Activated CD4-positive, alpha-beta T cell treated with anti-CD3 and anti-CD28 coated beads for 36 hours (primary cell): ENCODE measurements at regions of chr21 and their contacts with region 1.

Region 1: DNA sequence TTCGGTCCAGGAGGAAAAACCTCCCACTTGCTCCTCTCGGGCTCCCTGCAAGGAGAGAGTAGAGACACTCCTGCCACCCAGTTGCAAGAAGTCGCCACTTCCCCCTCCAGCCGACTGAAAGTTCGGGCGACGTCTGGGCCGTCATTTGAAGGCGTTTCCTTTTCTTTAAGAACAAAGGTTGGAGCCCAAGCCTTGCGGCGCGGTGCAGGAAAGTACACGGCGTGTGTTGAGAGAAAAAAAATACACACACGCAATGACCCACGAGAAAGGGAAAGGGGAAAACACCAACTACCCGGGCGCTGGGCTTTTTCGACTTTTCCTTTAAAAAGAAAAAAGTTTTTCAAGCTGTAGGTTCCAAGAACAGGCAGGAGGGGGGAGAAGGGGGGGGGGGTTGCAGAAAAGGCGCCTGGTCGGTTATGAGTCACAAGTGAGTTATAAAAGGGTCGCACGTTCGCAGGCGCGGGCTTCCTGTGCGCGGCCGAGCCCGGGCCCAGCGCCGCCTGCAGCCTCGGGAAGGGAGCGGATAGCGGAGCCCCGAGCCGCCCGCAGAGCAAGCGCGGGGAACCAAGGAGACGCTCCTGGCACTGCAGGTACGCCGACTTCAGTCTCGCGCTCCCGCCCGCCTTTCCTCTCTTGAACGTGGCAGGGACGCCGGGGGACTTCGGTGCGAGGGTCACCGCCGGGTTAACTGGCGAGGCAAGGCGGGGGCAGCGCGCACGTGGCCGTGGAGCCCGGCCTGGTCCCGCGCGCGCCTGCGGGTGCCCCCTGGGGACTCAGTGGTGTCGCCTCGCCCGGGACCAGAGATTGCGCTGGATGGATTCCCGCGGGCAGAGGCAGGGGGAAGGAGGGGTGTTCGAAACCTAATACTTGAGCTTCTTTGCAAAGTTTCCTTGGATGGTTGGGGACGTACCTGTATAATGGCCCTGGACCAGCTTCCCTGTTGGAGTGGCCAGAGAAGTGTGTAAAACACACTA is 45.3 kb downstream of the MRPL39 start:
- DNase-seq: peak; percentile 90
- ATAC-seq: peak; percentile 69
- H3K4me3 Mint-ChIP-seq: peak overlapping the region; percentile 93
- H3K27ac Mint-ChIP-seq: peak overlapping the region; percentile 100
- H3K4me1 Mint-ChIP-seq: peaks cover 43% of the 10 kb centered on the region
- H3K27me3 Mint-ChIP-seq: no peaks in the 10 kb centered on the region

Region 2: DNA sequence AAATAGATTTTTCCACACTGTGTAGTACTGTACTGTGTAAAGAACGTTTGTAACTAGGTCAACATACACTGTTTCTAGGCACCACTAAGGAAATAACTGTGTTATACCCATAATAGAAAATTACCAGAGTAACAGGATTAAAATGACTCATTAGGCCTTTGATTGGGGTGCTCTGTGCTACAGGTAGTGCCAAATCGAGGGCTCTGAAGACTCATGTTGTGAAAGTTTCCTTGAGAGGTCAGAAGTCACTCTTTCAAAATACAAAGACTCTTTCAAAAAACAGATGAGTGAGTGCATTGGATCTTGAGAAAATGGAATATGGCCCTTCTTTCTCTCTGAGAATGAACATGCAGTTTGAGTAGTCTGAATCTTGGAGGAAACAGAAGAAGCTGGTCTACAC is 97.7 kb before region 1 on chr21:
- CTCF ChIA-PET with region 1: interaction called, 4 read pairs
- POLR2A ChIA-PET with region 1: interaction called, 10 read pairs
- intact Hi-C with region 1: no loop called
- DNase-seq: peak; percentile 43
- ATAC-seq: peak; percentile 77
- H3K4me3 Mint-ChIP-seq: peak overlapping the region; percentile 45
- H3K27ac Mint-ChIP-seq: peak overlapping the region; percentile 95
- H3K4me1 Mint-ChIP-seq: peaks cover 77% of the 10 kb centered on the region
- H3K27me3 Mint-ChIP-seq: no peaks in the 10 kb centered on the region

Region 3: GRCh38 chr21:25501996-25502665 is 59.8 kb before region 1 on chr21:
- CTCF ChIA-PET with region 1: interaction called, 9 read pairs
- POLR2A ChIA-PET with region 1: interaction called, 16 read pairs
- intact Hi-C with region 1: loop called (anchors 1 kb)
- DNase-seq: peak; percentile 83
- ATAC-seq: peak; percentile 87
- H3K4me3 Mint-ChIP-seq: peak overlapping the region; percentile 57
- H3K27ac Mint-ChIP-seq: peak overlapping the region; percentile 99
- H3K4me1 Mint-ChIP-seq: peaks cover 80% of the 10 kb centered on the region
- H3K27me3 Mint-ChIP-seq: no peaks in the 10 kb centered on the region

Region 4: GRCh38 chr21:25507522-25507921 is 54.4 kb before region 1 on chr21:
- CTCF ChIA-PET with region 1: interaction called, 9 read pairs
- POLR2A ChIA-PET with region 1: interaction called, 16 read pairs
- intact Hi-C with region 1: loop called (anchors 1 kb)
- DNase-seq: peak; percentile 42
- ATAC-seq: peak; percentile 37
- H3K4me3 Mint-ChIP-seq: peak overlapping the region; percentile 66
- H3K27ac Mint-ChIP-seq: peak overlapping the region; percentile 86
- H3K4me1 Mint-ChIP-seq: peaks cover 75% of the 10 kb centered on the region
- H3K27me3 Mint-ChIP-seq: no peaks in the 10 kb centered on the region

Region 5: GRCh38 chr21:25528510-25528909 is 33.4 kb before region 1 on chr21:
- CTCF ChIA-PET with region 1: no interaction called
- POLR2A ChIA-PET with region 1: no interaction called
- intact Hi-C with region 1: no loop called
- DNase-seq: no peak
- ATAC-seq: no peak
- H3K4me3 Mint-ChIP-seq: no peak overlapping the region
- H3K27ac Mint-ChIP-seq: no peak overlapping the region
- H3K4me1 Mint-ChIP-seq: no peaks in the 10 kb centered on the region
- H3K27me3 Mint-ChIP-seq: peaks cover 2% of the 10 kb centered on the region